ENCODE measurements at regions of chr9 and their contacts with region 1.

Region 1: GRCh38 chr9:35696525-35697215 is 6.9 kb upstream of the TPM2 start:
- DNase-seq: peak; percentile 78
- ATAC-seq: peak; percentile 97
- H3K4me3 ChIP-seq: no peak overlapping the region
- H3K4me3 Mint-ChIP-seq: no peak overlapping the region
- H3K27ac ChIP-seq: no peak overlapping the region
- H3K27ac Mint-ChIP-seq: peak overlapping the region; percentile 79
- H3K4me1 ChIP-seq: peaks cover 0 to 7% of the 10 kb centered on the region in 2 donors
- H3K4me1 Mint-ChIP-seq: peaks cover 8% of the 10 kb centered on the region
- H3K27me3 ChIP-seq: no peaks in the 10 kb centered on the region
- H3K27me3 Mint-ChIP-seq: no peaks in the 10 kb centered on the region
- CTCF ChIP-seq: peak; percentile 91

Region 2: GRCh38 chr9:35287986-35288632 is 408.6 kb before region 1 on chr9:
- CTCF ChIA-PET with region 1: no interaction called
- POLR2A ChIA-PET with region 1: no interaction called
- intact Hi-C with region 1: no loop called
- DNase-seq: no peak
- ATAC-seq: no peak
- H3K4me3 ChIP-seq: no peak overlapping the region
- H3K4me3 Mint-ChIP-seq: no peak overlapping the region
- H3K27ac ChIP-seq: no peak overlapping the region
- H3K27ac Mint-ChIP-seq: no peak overlapping the region
- H3K4me1 ChIP-seq: no peaks in the 10 kb centered on the region
- H3K4me1 Mint-ChIP-seq: no peaks in the 10 kb centered on the region
- H3K27me3 ChIP-seq: peaks cover 0 to 6% (median 2%) of the 10 kb centered on the region in 4 experiments
- H3K27me3 Mint-ChIP-seq: peaks cover 28% of the 10 kb centered on the region
- CTCF ChIP-seq: no peak

Region 3: GRCh38 chr9:35303567-35303966 is 393.1 kb before region 1 on chr9:
- CTCF ChIA-PET with region 1: no interaction called
- POLR2A ChIA-PET with region 1: no interaction called
- intact Hi-C with region 1: no loop called
- DNase-seq: no peak
- ATAC-seq: no peak
- H3K4me3 ChIP-seq: no peak overlapping the region
- H3K4me3 Mint-ChIP-seq: no peak overlapping the region
- H3K27ac ChIP-seq: no peak overlapping the region
- H3K27ac Mint-ChIP-seq: no peak overlapping the region
- H3K4me1 ChIP-seq: no peaks in the 10 kb centered on the region
- H3K4me1 Mint-ChIP-seq: no peaks in the 10 kb centered on the region
- H3K27me3 ChIP-seq: peaks cover 0 to 20% (median 0%) of the 10 kb centered on the region in 4 experiments
- H3K27me3 Mint-ChIP-seq: peaks cover 64% of the 10 kb centered on the region
- CTCF ChIP-seq: no peak

Region 4: GRCh38 chr9:35603987-35604577 is 92.6 kb before region 1 on chr9:
- CTCF ChIA-PET with region 1: interaction called, 175 read pairs
- POLR2A ChIA-PET with region 1: no interaction called
- intact Hi-C with region 1: loop called (anchors 1 kb)
- DNase-seq: peak; percentile 100
- ATAC-seq: peak; percentile 86
- H3K4me3 ChIP-seq: peak overlapping the region; percentile 71 to 84 (median 81)
- H3K4me3 Mint-ChIP-seq: peak overlapping the region; percentile 97
- H3K27ac ChIP-seq: peak overlapping the region; percentile 80 to 84
- H3K27ac Mint-ChIP-seq: peak overlapping the region; percentile 99
- H3K4me1 ChIP-seq: peaks cover 26 to 46% of the 10 kb centered on the region in 2 donors
- H3K4me1 Mint-ChIP-seq: peaks cover 36% of the 10 kb centered on the region
- H3K27me3 ChIP-seq: no peaks in the 10 kb centered on the region
- H3K27me3 Mint-ChIP-seq: no peaks in the 10 kb centered on the region
- CTCF ChIP-seq: peak; percentile 97

Region 5: GRCh38 chr9:35616681-35617459 is 79.8 kb before region 1 on chr9:
- CTCF ChIA-PET with region 1: interaction called, 175 read pairs
- POLR2A ChIA-PET with region 1: interaction called, 5 read pairs
- intact Hi-C with region 1: loop called (anchors 1 kb)
- DNase-seq: peak; percentile 82
- ATAC-seq: peak; percentile 11
- H3K4me3 ChIP-seq: peak overlapping the region; percentile 80 to 91 (median 90)
- H3K4me3 Mint-ChIP-seq: peak overlapping the region; percentile 86
- H3K27ac ChIP-seq: peak overlapping the region; percentile 95 to 97
- H3K27ac Mint-ChIP-seq: peak overlapping the region; percentile 86
- H3K4me1 ChIP-seq: peaks cover 79 to 95% of the 10 kb centered on the region in 2 donors
- H3K4me1 Mint-ChIP-seq: peaks cover 94% of the 10 kb centered on the region
- H3K27me3 ChIP-seq: no peaks in the 10 kb centered on the region
- H3K27me3 Mint-ChIP-seq: no peaks in the 10 kb centered on the region
- CTCF ChIP-seq: peak; percentile 21

Region 6: DNA sequence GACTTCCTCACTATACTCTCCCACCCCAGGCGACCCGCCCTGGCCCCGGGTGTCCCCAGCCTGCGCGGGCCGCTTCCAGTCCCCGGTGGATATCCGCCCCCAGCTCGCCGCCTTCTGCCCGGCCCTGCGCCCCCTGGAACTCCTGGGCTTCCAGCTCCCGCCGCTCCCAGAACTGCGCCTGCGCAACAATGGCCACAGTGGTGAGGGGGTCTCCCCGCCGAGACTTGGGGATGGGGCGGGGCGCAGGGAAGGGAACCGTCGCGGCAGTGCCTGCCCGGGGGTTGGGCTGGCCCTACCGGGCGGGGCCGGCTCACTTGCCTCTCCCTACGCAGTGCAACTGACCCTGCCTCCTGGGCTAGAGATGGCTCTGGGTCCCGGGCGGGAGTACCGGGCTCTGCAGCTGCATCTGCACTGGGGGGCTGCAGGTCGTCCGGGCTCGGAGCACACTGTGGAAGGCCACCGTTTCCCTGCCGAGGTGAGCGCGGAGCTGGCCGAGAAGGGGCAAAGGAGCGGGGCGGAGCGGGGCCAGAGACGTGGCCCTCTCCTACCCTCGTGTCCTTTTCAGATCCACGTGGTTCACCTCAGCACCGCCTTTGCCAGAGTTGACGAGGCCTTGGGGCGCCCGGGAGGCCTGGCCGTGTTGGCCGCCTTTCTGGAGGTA is 20.8 kb before region 1 on chr9:
- CTCF ChIA-PET with region 1: interaction called, 34 read pairs
- POLR2A ChIA-PET with region 1: no interaction called
- intact Hi-C with region 1: no loop called
- DNase-seq: peak; percentile 55
- ATAC-seq: peak; percentile 71
- H3K4me3 ChIP-seq: peak overlapping the region in 4 of 5 experiments; percentile 47 to 60 (median 52)
- H3K4me3 Mint-ChIP-seq: peak overlapping the region; percentile 87
- H3K27ac ChIP-seq: no peak overlapping the region
- H3K27ac Mint-ChIP-seq: no peak overlapping the region
- H3K4me1 ChIP-seq: peaks cover 21 to 29% of the 10 kb centered on the region in 2 donors
- H3K4me1 Mint-ChIP-seq: peaks cover 29% of the 10 kb centered on the region
- H3K27me3 ChIP-seq: peaks cover 0 to 14% (median 3%) of the 10 kb centered on the region in 4 experiments
- H3K27me3 Mint-ChIP-seq: peaks cover 9% of the 10 kb centered on the region
- CTCF ChIP-seq: no peak

Region 7: GRCh38 chr9:35748858-35749514 is 52.3 kb after region 1 on chr9 and contains the starts of genes GBA2 and RGP1:
- CTCF ChIA-PET with region 1: interaction called, 11 read pairs
- POLR2A ChIA-PET with region 1: no interaction called
- intact Hi-C with region 1: no loop called
- DNase-seq: peak; percentile 82
- ATAC-seq: peak; percentile 83
- H3K4me3 ChIP-seq: peak within 1 kb of the TSS; percentile 73 to 92 (median 84)
- H3K4me3 Mint-ChIP-seq: peak within 1 kb of the TSS; percentile 96
- H3K27ac ChIP-seq: peak within 1 kb of the TSS; percentile 71 to 77
- H3K27ac Mint-ChIP-seq: peak within 1 kb of the TSS; percentile 96
- H3K4me1 ChIP-seq: peaks cover 37 to 41% of the 10 kb centered on the region in 2 donors
- H3K4me1 Mint-ChIP-seq: peaks cover 50% of the 10 kb centered on the region
- H3K27me3 ChIP-seq: no peaks in the 10 kb centered on the region
- H3K27me3 Mint-ChIP-seq: no peaks in the 10 kb centered on the region
- CTCF ChIP-seq: no peak
- total RNA-seq, gene GBA2: 137 and 158 TPM in 2 replicates
- total RNA-seq, gene RGP1: 42.3 and 44.3 TPM in 2 replicates

Region 8: GRCh38 chr9:35829084-35829763 is 132.6 kb after region 1 on chr9 and contains the start of gene TMEM8B:
- CTCF ChIA-PET with region 1: interaction called, 11 read pairs
- POLR2A ChIA-PET with region 1: no interaction called
- intact Hi-C with region 1: no loop called
- DNase-seq: peak; percentile 94
- ATAC-seq: peak; percentile 92
- H3K4me3 ChIP-seq: peak within 1 kb of the TSS; percentile 32 to 80 (median 78)
- H3K4me3 Mint-ChIP-seq: peak within 1 kb of the TSS; percentile 96
- H3K27ac ChIP-seq: peak within 1 kb of the TSS; percentile 60 to 78
- H3K27ac Mint-ChIP-seq: peak within 1 kb of the TSS; percentile 89
- H3K4me1 ChIP-seq: peaks cover 24 to 35% of the 10 kb centered on the region in 2 donors
- H3K4me1 Mint-ChIP-seq: peaks cover 44% of the 10 kb centered on the region
- H3K27me3 ChIP-seq: no peaks in the 10 kb centered on the region
- H3K27me3 Mint-ChIP-seq: no peaks in the 10 kb centered on the region
- CTCF ChIP-seq: no peak
- total RNA-seq, gene TMEM8B: 13.6 and 14.5 TPM in 2 replicates

Measured in B cell (primary cell).